PC-3 (cell line): ENCODE measurements at regions of chr2 and their contacts with region 1.

Region 1: DNA sequence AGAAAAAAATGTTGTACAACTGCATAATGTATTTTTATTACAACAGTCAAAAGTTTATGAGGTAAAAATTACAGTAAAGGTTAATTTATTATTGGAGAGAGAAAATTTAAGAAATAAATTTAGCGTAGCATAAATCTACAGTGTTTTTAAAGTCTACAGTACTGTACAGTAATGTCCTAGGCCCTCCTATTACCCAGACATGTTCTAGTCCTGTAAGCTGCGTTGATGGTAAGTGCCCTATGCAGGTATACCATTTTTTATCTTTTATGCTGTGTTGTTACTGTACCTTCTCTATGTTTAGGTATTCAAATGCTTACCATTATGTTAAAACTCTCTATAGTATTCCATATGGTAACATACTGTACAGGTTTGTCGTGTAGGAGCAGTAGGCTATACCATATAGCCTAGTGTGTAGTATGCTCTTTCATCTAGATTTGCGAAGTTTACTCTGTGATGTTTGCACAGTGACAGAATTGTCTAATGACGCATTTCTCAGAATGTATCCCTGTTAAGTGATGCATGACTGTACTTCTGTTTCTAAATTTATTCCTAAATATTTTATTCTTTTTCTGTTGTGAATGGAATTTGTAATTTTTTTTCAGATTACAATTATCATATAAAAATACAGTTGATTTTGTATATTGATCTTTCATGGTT is 24.5 kb downstream of the ABI2 start:
- DNase-seq: peak; percentile 91
- ATAC-seq: peak; percentile 100
- H3K4me3 ChIP-seq: 0 out of 2 replicates have a peak overlapping the region, but pooled peaks have one; percentile 19
- H3K27ac ChIP-seq: peak overlapping the region; percentile 93
- H3K4me1 ChIP-seq: peaks cover 28% of the 10 kb centered on the region
- H3K27me3 ChIP-seq: no peaks in the 10 kb centered on the region
- CTCF ChIP-seq: no peak

Region 2: GRCh38 chr2:203400816-203401585 is 48.3 kb after region 1 on chr2:
- CTCF ChIA-PET with region 1: no interaction called
- POLR2A ChIA-PET with region 1: no interaction called
- intact Hi-C with region 1: loop called (anchors 5 kb)
- DNase-seq: peak; percentile 70
- ATAC-seq: peak; percentile 43
- H3K4me3 ChIP-seq: no peak overlapping the region; the same call in 1 of the 2 replicates
- H3K27ac ChIP-seq: peak overlapping the region; percentile 95
- H3K4me1 ChIP-seq: peaks cover 55% of the 10 kb centered on the region
- H3K27me3 ChIP-seq: no peaks in the 10 kb centered on the region
- CTCF ChIP-seq: no peak